Activated T-helper 2 cell treated with anti-CD3 and anti-CD28 coated beads, Interferon-gamma antibody, Interleukin-2, Interleukin-4, amounts not matched to agents 10 μg/mL and 5 μg/mL and 100 μg/mL, durations not matched to agents 14 hours and 24 hours and 36 hours (primary cell): ENCODE measurements at regions of chr6 and their contacts with region 1.

Region 1: DNA sequence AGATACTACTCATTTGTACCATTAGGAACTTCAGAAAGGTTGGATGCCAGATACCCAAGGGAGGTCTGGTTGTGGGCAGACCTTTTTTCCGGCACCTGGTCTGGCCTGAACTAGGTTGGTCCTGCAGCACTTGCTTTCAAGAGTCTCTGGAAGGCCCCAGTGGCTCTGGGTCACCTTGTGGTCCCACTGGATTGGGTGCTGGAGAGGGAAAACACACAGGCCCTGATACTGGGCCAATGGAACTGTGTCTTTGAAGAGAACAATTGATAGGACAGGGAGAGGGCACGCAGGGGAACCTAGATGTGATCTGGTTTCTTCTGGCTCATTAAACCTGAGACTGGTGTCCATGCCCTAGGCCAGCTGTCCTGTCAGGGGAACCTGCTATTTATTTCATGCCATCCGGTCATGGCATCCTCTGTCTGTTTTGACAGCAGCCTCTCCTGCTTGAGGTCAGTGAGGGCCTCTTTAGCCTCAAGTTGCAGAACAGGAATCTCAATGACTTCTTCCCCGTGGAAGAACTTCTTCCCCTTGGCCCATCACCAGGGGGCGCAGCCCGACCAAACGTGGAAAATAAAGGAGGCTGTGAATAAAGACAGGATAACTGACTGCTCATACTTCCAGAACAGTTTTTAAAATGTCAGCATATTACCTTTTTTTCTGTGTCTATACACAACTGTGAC is 25.0 kb downstream of the TAF8 start:
- DNase-seq: peak; percentile 46
- H3K4me3 Mint-ChIP-seq: no peak overlapping the region
- H3K27ac Mint-ChIP-seq: no peak overlapping the region
- H3K4me1 Mint-ChIP-seq: no peaks in the 10 kb centered on the region
- H3K27me3 Mint-ChIP-seq: no peaks in the 10 kb centered on the region

Region 2: GRCh38 chr6:42104095-42104806 is 29.0 kb after region 1 on chr6:
- intact Hi-C with region 1: loop called (anchors 1 kb)
- DNase-seq: peak; percentile 66
- H3K4me3 Mint-ChIP-seq: peak overlapping the region; percentile 63
- H3K27ac Mint-ChIP-seq: peak overlapping the region; percentile 51
- H3K4me1 Mint-ChIP-seq: peaks cover 21% of the 10 kb centered on the region
- H3K27me3 Mint-ChIP-seq: no peaks in the 10 kb centered on the region

Region 3: GRCh38 chr6:42166444-42167141 is 91.3 kb after region 1 on chr6:
- intact Hi-C with region 1: loop called (anchors 1 kb)
- DNase-seq: peak; percentile 64
- H3K4me3 Mint-ChIP-seq: no peak overlapping the region
- H3K27ac Mint-ChIP-seq: no peak overlapping the region
- H3K4me1 Mint-ChIP-seq: no peaks in the 10 kb centered on the region
- H3K27me3 Mint-ChIP-seq: peaks cover 6% of the 10 kb centered on the region